ENCODE measurements at regions of chr3 and their contacts with region 1.

Region 1: GRCh38 chr3:53140847-53141845 is 10.9 kb upstream of the RFT1 start:
- DNase-seq: peak in 2 of 3 donors; percentile 43 to 45
- H3K4me3 ChIP-seq: no peak overlapping the region
- H3K27ac ChIP-seq: no peak overlapping the region
- H3K4me1 ChIP-seq: peaks cover 5 to 55% (median 8%) of the 10 kb centered on the region in 4 experiments
- H3K27me3 ChIP-seq: no peaks in the 10 kb centered on the region

Region 2: GRCh38 chr3:52907497-52907896 is 233.6 kb before region 1 on chr3:
- CTCF ChIA-PET with region 1: no interaction called
- POLR2A ChIA-PET with region 1: no interaction called
- DNase-seq: peak in 1 of 3 donors; percentile 38
- H3K4me3 ChIP-seq: no peak overlapping the region
- H3K27ac ChIP-seq: no peak overlapping the region
- H3K4me1 ChIP-seq: no peaks in the 10 kb centered on the region
- H3K27me3 ChIP-seq: no peaks in the 10 kb centered on the region

Region 3: DNA sequence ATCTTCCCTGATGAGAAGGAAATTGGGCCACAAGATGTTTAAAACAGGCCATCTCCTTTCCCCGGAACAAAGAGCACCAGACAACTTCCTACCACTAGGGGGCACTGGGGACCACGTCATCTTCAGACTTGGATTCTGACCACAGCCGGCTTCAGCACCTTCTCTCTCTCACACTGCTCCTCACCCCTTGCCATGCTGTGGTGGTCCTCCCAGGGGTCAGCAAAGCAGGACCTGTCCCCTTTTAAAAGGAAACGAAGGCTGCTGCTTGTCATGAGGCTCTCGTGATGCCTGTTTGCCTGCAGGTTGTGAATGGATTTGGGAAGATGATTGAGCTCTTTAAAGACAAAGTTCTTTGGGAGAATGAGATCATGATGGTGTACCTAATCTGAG is 27.1 kb before region 1 on chr3:
- CTCF ChIA-PET with region 1: interaction called, 118 read pairs
- POLR2A ChIA-PET with region 1: no interaction called
- DNase-seq: peak; percentile 74 to 87 (median 82)
- H3K4me3 ChIP-seq: no peak overlapping the region
- H3K27ac ChIP-seq: no peak overlapping the region
- H3K4me1 ChIP-seq: peaks cover 0 to 28% (median 8%) of the 10 kb centered on the region in 4 experiments
- H3K27me3 ChIP-seq: no peaks in the 10 kb centered on the region

Region 4: DNA sequence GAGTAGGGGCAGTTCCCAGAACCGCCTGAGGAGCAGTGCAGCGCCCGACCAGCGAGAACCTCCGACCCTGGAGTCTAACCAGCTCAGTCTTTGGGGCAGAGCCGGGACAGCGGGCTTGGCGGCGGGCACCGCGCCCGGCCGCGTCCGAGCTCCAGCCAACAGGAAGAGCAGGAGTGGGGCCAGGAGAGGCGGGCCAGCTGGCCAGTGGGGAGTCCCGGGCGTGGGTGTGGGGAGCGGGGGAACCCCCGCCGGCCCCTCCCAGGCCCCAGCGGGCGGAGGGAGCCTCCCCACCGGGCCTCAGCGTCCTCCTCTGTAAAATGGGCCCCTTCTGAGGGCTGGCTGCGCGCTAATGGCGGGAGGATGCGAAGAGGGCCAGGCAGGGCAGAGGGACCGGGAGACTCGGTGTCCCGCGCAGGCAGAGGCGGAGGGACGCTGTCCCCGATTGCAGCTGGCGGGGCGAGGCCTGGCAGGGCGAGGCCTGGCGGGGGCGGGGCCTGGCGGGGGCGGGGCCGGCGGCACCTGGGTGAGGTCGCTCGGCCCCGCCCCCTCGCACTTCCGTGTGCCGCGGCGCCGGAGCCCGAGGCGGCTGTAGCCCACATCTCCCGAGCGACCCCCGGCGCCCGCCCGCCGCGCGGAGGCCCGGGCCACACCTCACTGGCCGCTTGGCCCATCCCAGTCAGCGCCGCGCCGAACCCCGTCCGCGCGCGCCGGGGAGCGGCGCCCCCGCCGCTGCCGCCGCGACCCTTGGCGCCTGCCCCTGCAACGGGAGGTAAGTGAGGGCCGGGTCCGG is 19.7 kb after region 1 on chr3 and contains the start of gene PRKCD:
- CTCF ChIA-PET with region 1: interaction called, 14 read pairs
- POLR2A ChIA-PET with region 1: no interaction called
- DNase-seq: peak; percentile 51 to 79 (median 75)
- H3K4me3 ChIP-seq: peak within 1 kb of the TSS; percentile 61 to 83 (median 73)
- H3K27ac ChIP-seq: no peak within 1 kb of the TSS
- H3K4me1 ChIP-seq: peaks cover 2 to 73% (median 39%) of the 10 kb centered on the region in 4 experiments
- H3K27me3 ChIP-seq: peaks cover 0 to 29% (median 8%) of the 10 kb centered on the region in 5 experiments

Region 5: DNA sequence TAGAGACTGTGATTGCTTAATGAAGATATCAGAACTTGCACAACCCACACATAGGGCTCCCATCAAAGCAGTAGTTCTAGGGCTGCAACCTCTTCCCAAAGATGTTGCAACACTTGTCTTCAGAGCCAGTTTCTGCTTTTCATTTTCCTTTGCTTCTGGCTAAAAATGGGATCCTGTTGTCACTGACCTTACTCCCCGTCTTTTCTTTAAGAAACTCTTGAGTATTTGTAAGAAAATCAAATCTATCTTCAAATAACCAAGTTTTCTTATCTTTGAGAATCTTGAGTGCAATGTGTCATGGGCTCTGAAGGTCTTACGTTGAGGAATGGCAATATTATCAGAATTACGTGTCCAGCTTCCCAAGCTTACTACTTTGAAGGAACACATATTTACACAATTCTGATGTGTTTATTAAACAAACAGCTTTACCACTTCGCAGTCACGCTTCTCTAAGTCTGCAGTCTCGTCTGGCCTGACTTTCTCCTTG is 377.4 kb after region 1 on chr3:
- CTCF ChIA-PET with region 1: no interaction called
- POLR2A ChIA-PET with region 1: no interaction called
- DNase-seq: no peak
- H3K4me3 ChIP-seq: no peak overlapping the region
- H3K27ac ChIP-seq: no peak overlapping the region
- H3K4me1 ChIP-seq: no peaks in the 10 kb centered on the region
- H3K27me3 ChIP-seq: peaks cover 0 to 3% (median 0%) of the 10 kb centered on the region in 5 experiments